ENCODE measurements at regions of chr1 and their contacts with region 1.

Region 1: DNA sequence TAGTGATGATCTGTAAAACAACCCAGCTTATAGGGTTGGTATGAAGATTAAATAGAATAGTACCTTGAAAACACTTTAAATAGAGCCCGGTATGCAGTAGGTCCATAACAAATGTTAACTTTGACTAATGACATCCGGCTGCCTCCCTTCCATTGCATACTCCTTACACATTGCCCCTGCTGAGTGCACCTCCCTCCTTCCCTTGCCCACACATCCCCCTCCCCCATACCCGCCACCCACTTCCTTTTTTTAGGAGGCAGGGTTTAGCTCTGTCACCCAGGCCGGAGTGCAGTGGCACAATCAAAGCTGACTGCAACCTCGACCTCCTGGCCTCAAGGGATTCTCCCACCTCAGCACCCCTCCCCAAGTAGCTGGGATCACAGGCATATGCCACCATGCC is 24.4 kb upstream of the ZC3H12A start:
- DNase-seq: no peak
- H3K4me3 ChIP-seq: no peak overlapping the region
- H3K27ac ChIP-seq: no peak overlapping the region
- H3K4me1 ChIP-seq: peaks cover 0 to under 1% (median 0%) of the 10 kb centered on the region in 3 donors
- H3K27me3 ChIP-seq: no peaks in the 10 kb centered on the region
- CTCF ChIP-seq: no peak

Region 2: GRCh38 chr1:37682334-37682987 is 232.5 kb after region 1 on chr1:
- intact Hi-C with region 1: loop called (anchors 10 kb)
- DNase-seq: peak in 4 of 5 donors; percentile 67 to 82 (median 76)
- H3K4me3 ChIP-seq: no peak overlapping the region
- H3K27ac ChIP-seq: no peak overlapping the region
- H3K4me1 ChIP-seq: no peaks in the 10 kb centered on the region
- H3K27me3 ChIP-seq: no peaks in the 10 kb centered on the region
- CTCF ChIP-seq: peak; percentile 83